CD8-positive, alpha-beta T cell (primary cell): ENCODE measurements at regions of chr11 and their contacts with region 1.

Region 1: GRCh38 chr11:128026596-128026995 is 560.8 kb downstream of the ETS1 start:
- DNase-seq: no peak
- ATAC-seq: no peak
- H3K4me3 ChIP-seq: no peak overlapping the region
- H3K4me3 Mint-ChIP-seq: no peak overlapping the region
- H3K27ac ChIP-seq: no peak overlapping the region
- H3K27ac Mint-ChIP-seq: no peak overlapping the region
- H3K4me1 ChIP-seq: no peaks in the 10 kb centered on the region
- H3K4me1 Mint-ChIP-seq: peaks cover 2% of the 10 kb centered on the region
- H3K27me3 ChIP-seq: no peaks in the 10 kb centered on the region
- H3K27me3 Mint-ChIP-seq: peaks cover 5% of the 10 kb centered on the region
- CTCF ChIP-seq: no peak

Region 2: DNA sequence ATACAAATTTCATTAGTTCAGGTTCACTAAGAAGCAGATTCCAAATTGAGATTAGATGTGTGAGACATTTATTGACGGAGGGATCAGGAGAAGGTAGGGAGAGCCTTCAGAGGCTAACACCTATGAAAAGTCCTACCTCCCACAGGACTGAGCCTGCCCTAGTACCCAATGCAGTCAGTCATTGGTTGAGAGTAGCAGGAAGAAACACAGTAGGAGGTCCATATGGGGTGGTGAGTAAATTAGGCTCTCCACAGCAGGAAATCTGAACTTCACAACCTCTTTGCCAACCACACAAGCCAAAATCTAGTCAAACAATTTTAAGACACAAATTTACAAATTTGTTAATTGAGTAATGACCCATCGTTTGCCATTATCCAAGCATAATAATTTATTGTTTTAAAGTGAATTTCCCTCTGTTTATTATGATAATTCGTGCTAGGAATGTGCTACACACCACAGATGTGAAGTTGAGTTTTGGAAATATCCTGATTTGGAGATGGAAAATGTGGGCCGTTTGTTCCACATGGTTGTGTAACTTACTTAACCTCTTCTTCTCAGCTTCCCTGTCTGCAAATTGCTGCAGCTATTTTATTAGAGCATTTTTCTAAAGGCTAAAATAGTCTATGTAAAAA is 18.6 kb after region 1 on chr11:
- CTCF ChIA-PET with region 1: interaction called, 17 read pairs
- POLR2A ChIA-PET with region 1: no interaction called
- intact Hi-C with region 1: no loop called
- DNase-seq: peak in 1 of 9 experiments; percentile 54
- ATAC-seq: no peak
- H3K4me3 ChIP-seq: no peak overlapping the region
- H3K4me3 Mint-ChIP-seq: no peak overlapping the region
- H3K27ac ChIP-seq: no peak overlapping the region
- H3K27ac Mint-ChIP-seq: no peak overlapping the region
- H3K4me1 ChIP-seq: peaks cover 49% of the 10 kb centered on the region
- H3K4me1 Mint-ChIP-seq: peaks cover 69% of the 10 kb centered on the region
- H3K27me3 ChIP-seq: no peaks in the 10 kb centered on the region
- H3K27me3 Mint-ChIP-seq: no peaks in the 10 kb centered on the region
- CTCF ChIP-seq: no peak

Region 3: GRCh38 chr11:128086794-128087193 is 60.2 kb after region 1 on chr11:
- CTCF ChIA-PET with region 1: interaction called, 22 read pairs
- POLR2A ChIA-PET with region 1: no interaction called
- intact Hi-C with region 1: loop called (anchors 1 to 2 kb)
- DNase-seq: peak in 3 of 9 experiments; percentile 24 to 61 (median 47)
- ATAC-seq: peak; percentile 62
- H3K4me3 ChIP-seq: no peak overlapping the region
- H3K4me3 Mint-ChIP-seq: no peak overlapping the region
- H3K27ac ChIP-seq: no peak overlapping the region
- H3K27ac Mint-ChIP-seq: no peak overlapping the region
- H3K4me1 ChIP-seq: peaks cover 25% of the 10 kb centered on the region
- H3K4me1 Mint-ChIP-seq: peaks cover 45% of the 10 kb centered on the region
- H3K27me3 ChIP-seq: no peaks in the 10 kb centered on the region
- H3K27me3 Mint-ChIP-seq: no peaks in the 10 kb centered on the region
- CTCF ChIP-seq: no peak

Region 4: GRCh38 chr11:128146926-128147605 is 120.5 kb after region 1 on chr11:
- CTCF ChIA-PET with region 1: interaction called, 21 read pairs
- POLR2A ChIA-PET with region 1: no interaction called
- intact Hi-C with region 1: no loop called
- DNase-seq: no peak
- ATAC-seq: no peak
- H3K4me3 ChIP-seq: no peak overlapping the region
- H3K4me3 Mint-ChIP-seq: no peak overlapping the region
- H3K27ac ChIP-seq: no peak overlapping the region
- H3K27ac Mint-ChIP-seq: no peak overlapping the region
- H3K4me1 ChIP-seq: no peaks in the 10 kb centered on the region
- H3K4me1 Mint-ChIP-seq: no peaks in the 10 kb centered on the region
- H3K27me3 ChIP-seq: no peaks in the 10 kb centered on the region
- H3K27me3 Mint-ChIP-seq: no peaks in the 10 kb centered on the region
- CTCF ChIP-seq: no peak

Region 5: DNA sequence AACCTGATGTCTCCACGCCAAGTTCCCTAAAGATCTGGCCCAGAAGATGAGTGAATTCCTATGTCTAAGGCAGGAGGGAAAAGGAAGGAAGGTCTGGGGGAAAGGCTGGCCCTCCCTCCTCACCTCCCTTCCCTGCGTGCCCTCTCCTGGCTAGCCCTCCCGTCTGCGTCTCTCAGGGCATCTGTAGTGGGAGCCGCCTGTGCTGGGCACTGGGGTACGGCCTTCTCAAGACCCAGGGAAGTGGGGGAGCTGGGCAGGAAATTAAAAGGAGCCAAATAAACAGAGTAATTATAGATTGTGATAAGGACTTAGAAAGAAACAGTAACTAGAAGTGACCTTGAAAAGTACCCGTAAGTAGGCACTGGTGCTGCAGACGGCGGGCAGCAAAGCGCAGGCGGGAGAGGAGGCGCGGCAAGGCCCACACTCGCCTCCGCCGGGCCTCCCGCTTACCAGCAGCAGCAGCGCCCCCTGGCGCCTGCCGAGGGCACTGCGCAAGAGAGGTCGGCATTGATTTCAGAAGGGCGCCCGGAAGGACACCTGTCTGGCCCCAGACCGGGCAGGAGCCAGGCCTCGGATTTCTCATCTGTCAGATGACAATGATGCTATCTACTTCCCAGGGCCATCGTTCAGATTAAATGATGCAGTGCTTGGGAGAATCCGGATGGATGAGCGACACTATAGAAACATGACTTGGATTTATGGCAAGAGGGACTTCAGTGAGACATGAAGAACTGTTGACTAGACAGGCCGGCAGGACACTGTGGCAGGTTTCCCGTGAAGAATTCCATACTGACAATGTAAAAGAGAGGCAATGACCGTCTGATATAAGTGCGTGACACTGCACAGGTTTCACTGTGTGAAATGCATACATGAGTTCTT is 833.2 kb after region 1 on chr11:
- CTCF ChIA-PET with region 1: interaction called, 5 read pairs
- POLR2A ChIA-PET with region 1: no interaction called
- intact Hi-C with region 1: loop called (anchors 2 to 5 kb)
- DNase-seq: peak; percentile 64 to 83 (median 75)
- ATAC-seq: peak; percentile 97
- H3K4me3 ChIP-seq: no peak overlapping the region
- H3K4me3 Mint-ChIP-seq: no peak overlapping the region
- H3K27ac ChIP-seq: no peak overlapping the region
- H3K27ac Mint-ChIP-seq: no peak overlapping the region
- H3K4me1 ChIP-seq: no peaks in the 10 kb centered on the region
- H3K4me1 Mint-ChIP-seq: peaks cover 4% of the 10 kb centered on the region
- H3K27me3 ChIP-seq: no peaks in the 10 kb centered on the region
- H3K27me3 Mint-ChIP-seq: peaks cover 2% of the 10 kb centered on the region
- CTCF ChIP-seq: peak; percentile 99

Region 6: GRCh38 chr11:128956401-128957201 is 930.0 kb after region 1 on chr11:
- CTCF ChIA-PET with region 1: no interaction called
- POLR2A ChIA-PET with region 1: no interaction called
- intact Hi-C with region 1: loop called (anchors 1 to 5 kb)
- DNase-seq: peak in 3 of 9 experiments; percentile 12 to 66 (median 59)
- ATAC-seq: no peak
- H3K4me3 ChIP-seq: no peak overlapping the region
- H3K4me3 Mint-ChIP-seq: no peak overlapping the region
- H3K27ac ChIP-seq: no peak overlapping the region
- H3K27ac Mint-ChIP-seq: no peak overlapping the region
- H3K4me1 ChIP-seq: no peaks in the 10 kb centered on the region
- H3K4me1 Mint-ChIP-seq: peaks cover 2% of the 10 kb centered on the region
- H3K27me3 ChIP-seq: no peaks in the 10 kb centered on the region
- H3K27me3 Mint-ChIP-seq: peaks cover 8% of the 10 kb centered on the region
- CTCF ChIP-seq: peak; percentile 70